ENCODE measurements at regions of chr5 and their contacts with region 1.

Region 1: DNA sequence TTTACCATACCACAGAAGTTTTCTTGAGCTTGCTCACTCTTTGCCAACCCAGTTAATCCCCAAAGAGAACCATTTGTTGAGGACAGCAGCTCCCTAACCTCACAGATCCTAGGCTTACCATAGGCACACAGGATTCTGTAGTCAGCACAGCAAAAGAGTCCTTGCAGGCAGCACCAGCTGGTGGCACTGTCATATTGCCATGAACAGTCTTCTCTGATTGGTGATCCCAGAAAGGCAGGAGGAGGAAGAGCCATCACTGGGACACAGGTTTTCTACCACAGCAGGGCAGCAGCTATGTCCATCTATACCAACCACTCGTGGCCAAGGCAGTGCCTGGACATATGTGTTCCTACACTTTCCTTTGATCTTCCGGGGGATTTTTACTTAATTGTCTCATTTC is 297.1 kb upstream of the CD180 start:
- DNase-seq: peak; percentile 53 to 79
- ATAC-seq: peak; percentile 75 to 84
- H3K4me3 ChIP-seq: peak overlapping the region in 1 of 4 donors; percentile 6
- H3K27ac ChIP-seq: peak overlapping the region; percentile 78 to 94 (median 89)
- H3K4me1 ChIP-seq: peaks cover 16 to 21% of the 10 kb centered on the region in 2 donors
- H3K27me3 ChIP-seq: no peaks in the 10 kb centered on the region
- CTCF ChIP-seq: peak in 3 of 5 experiments; percentile 28 to 39 (median 38)
- POLR2A ChIP-seq: no peak

Region 2: DNA sequence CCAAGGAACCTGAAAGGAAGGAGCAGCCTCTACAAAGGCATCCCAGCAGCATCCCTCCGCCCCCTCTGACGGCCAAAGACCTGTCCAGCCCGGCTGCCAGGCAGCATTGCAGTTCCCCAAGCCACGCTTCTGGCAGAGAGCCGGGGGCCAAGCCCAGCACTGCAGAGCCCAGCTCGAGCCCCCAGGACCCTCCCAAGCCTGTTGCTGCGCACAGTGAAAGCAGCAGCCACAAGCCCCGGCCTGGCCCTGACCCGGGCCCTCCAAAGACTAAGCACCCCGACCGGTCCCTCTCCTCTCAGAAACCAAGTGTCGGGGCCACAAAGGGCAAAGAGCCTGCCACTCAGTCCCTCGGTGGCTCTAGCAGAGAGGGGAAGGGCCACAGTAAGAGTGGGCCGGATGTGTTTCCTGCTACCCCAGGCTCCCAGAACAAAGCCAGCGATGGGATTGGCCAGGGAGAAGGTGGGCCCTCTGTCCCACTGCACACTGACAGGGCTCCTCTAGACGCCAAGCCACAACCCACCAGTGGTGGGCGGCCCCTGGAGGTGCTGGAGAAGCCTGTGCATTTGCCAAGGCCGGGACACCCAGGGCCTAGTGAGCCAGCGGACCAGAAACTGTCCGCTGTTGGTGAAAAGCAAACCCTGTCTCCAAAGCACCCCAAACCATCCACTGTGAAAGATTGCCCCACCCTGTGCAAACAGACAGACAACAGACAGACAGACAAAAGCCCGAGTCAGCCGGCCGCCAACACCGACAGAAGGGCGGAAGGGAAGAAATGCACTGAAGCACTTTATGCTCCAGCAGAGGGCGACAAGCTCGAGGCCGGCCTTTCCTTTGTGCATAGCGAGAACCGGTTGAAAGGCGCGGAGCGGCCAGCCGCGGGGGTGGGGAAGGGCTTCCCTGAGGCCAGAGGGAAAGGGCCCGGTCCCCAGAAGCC is 327.9 kb before region 1 on chr5:
- in situ Hi-C with region 1: no loop called
- intact Hi-C with region 1: no loop called
- DNase-seq: peak; percentile 44 to 72
- ATAC-seq: peak; percentile 63 to 79
- H3K4me3 ChIP-seq: peak overlapping the region; percentile 8 to 46 (median 18)
- H3K27ac ChIP-seq: peak overlapping the region; percentile 53 to 75 (median 57)
- H3K4me1 ChIP-seq: no peaks in the 10 kb centered on the region
- H3K27me3 ChIP-seq: no peaks in the 10 kb centered on the region
- CTCF ChIP-seq: peak; percentile 28 to 60 (median 56)
- POLR2A ChIP-seq: no peak

Region 3: GRCh38 chr5:67315082-67315989 is 178.3 kb before region 1 on chr5:
- in situ Hi-C with region 1: no loop called
- intact Hi-C with region 1: no loop called
- DNase-seq: no peak
- ATAC-seq: no peak
- H3K4me3 ChIP-seq: peak overlapping the region in 1 of 4 donors; percentile 25
- H3K27ac ChIP-seq: peak overlapping the region in 1 of 4 donors; percentile 31
- H3K4me1 ChIP-seq: no peaks in the 10 kb centered on the region
- H3K27me3 ChIP-seq: no peaks in the 10 kb centered on the region
- CTCF ChIP-seq: no peak
- POLR2A ChIP-seq: no peak

Region 4: GRCh38 chr5:67476531-67476930 is 17.1 kb before region 1 on chr5:
- in situ Hi-C with region 1: no loop called
- intact Hi-C with region 1: loop called (anchors 2 kb)
- DNase-seq: no peak
- ATAC-seq: no peak
- H3K4me3 ChIP-seq: no peak overlapping the region
- H3K27ac ChIP-seq: peak overlapping the region; percentile 87 to 95 (median 90)
- H3K4me1 ChIP-seq: peaks cover 4 to 11% of the 10 kb centered on the region in 2 donors
- H3K27me3 ChIP-seq: no peaks in the 10 kb centered on the region
- CTCF ChIP-seq: no peak
- POLR2A ChIP-seq: no peak

Region 5: GRCh38 chr5:67693956-67694809 is 200.5 kb after region 1 on chr5:
- in situ Hi-C with region 1: loop called in 1 of 4 experiments (anchors 25 kb)
- intact Hi-C with region 1: loop called (anchors 2 kb)
- DNase-seq: peak; percentile 94 to 98
- ATAC-seq: peak; percentile 95
- H3K4me3 ChIP-seq: peak overlapping the region in 1 of 4 donors; percentile 22
- H3K27ac ChIP-seq: peak overlapping the region; percentile 88 to 93 (median 90)
- H3K4me1 ChIP-seq: peaks cover 29 to 30% of the 10 kb centered on the region in 2 donors
- H3K27me3 ChIP-seq: no peaks in the 10 kb centered on the region
- CTCF ChIP-seq: peak in 1 of 5 experiments; percentile 18
- POLR2A ChIP-seq: peak; percentile 52 to 84

Region 6: DNA sequence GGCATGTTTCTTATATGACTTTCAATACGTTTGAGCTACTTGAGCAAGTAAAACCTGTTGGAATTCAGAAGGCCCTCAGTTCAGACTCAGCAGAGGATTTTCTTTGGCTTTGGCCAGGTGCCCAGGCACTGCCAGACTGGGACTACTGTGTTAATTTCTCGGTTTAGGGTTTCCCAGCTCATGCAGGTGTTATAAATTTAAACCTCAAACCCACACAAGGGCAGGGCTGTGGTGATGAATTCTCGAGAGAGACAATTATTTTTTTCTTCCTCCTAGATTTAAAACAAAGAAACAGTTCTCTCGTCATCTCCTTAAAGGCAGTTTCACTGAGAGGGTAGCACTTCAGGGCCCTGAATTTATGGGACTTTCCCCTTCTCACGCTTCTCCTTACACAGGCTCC is 315.9 kb after region 1 on chr5:
- in situ Hi-C with region 1: loop called in 1 of 4 experiments (anchors 25 kb)
- intact Hi-C with region 1: loop called (anchors 5 kb)
- DNase-seq: no peak
- ATAC-seq: no peak
- H3K4me3 ChIP-seq: no peak overlapping the region
- H3K27ac ChIP-seq: peak overlapping the region; percentile 91 to 95 (median 92)
- H3K4me1 ChIP-seq: peaks cover 39 to 44% of the 10 kb centered on the region in 2 donors
- H3K27me3 ChIP-seq: no peaks in the 10 kb centered on the region
- CTCF ChIP-seq: no peak
- POLR2A ChIP-seq: no peak

Region 7: DNA sequence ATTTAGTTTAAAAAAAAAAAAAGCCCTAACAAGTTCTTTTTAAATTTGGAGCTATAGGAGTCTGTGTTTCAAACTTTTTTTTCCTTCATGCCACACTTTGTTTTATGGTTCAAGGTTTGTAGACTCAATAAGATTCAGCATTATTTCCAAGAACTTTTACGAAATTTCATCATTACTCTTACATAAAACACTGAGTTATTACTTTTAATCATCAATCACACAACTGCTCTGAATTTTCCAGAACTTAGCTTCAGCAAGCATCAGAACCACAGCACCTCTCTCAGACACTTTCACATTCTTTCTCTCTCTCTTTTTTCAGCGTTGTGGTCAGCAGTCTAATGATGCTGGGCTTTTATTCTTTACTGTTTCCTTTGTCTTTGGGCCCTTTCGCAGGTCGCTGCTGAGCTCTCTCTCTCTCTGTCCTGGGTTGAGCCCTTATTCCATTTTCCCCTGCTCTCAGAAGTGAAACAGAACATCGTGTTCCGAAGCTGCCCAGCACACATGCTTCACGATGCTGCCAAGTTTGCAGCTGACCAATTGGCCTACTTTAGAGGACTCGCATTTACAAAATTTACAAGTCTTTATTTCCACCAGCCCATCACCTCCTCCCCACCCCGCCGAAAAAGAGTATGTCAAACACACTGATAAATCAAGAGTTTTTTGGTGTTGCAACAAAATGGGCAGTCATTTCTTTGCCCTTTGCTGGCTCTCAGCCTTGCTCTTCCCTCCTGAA is 677.3 kb after region 1 on chr5:
- in situ Hi-C with region 1: no loop called
- intact Hi-C with region 1: loop called (anchors 10 kb)
- DNase-seq: peak; percentile 82 to 93
- ATAC-seq: peak; percentile 99 to 100
- H3K4me3 ChIP-seq: peak overlapping the region; percentile 18 to 31 (median 26)
- H3K27ac ChIP-seq: peak overlapping the region; percentile 73 to 86 (median 85)
- H3K4me1 ChIP-seq: peaks cover 27 to 31% of the 10 kb centered on the region in 2 donors
- H3K27me3 ChIP-seq: no peaks in the 10 kb centered on the region
- CTCF ChIP-seq: no peak
- POLR2A ChIP-seq: peak in 1 of 2 donors; percentile 30

Region 8: DNA sequence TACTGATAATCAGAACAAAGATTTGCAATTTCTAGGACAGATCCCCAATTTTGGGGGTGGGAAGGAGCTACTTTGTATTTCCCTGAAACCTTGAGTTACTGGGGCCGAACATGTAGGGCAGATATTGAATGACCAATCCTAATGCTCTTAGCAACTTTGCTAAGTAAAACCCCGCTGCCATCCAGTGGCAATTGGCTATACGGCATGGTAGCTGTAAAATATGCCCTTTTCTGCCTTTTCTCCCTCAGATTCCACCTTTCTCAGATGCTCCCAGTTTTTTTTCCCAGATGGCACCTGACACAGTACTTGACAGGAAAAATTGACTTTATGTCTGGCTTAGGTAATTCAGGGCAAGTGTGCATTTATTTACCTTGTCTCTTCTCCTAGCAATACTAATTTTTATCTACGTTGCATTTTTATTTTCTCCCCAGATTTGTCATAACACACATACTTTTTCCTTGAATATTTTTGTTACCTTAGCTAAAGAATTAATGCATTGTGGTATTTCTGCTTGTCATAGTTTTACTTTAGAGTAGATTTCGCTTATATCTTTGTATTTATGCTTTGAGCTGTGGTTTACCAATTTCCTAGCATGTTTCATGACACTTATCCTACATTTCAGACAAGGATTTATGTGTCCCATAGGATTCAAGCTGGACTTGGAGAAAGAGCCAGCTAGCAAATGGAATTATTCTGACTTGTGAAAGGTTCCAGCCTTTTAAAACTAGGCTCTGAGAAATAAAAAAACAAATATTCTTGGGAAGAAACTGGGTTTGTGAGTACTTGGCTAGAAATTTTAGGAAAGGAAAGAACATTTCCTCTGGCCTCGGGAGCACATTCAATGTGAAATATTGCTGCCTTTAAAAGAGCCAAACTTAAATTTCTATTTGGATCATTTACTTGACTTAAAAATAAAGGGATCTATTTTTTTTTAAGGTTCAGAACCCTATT is 759.3 kb after region 1 on chr5:
- in situ Hi-C with region 1: loop called in 1 of 4 experiments (anchors 25 kb)
- intact Hi-C with region 1: loop called (anchors 1 kb)
- DNase-seq: peak; percentile 36 to 61
- ATAC-seq: peak; percentile 77 to 83
- H3K4me3 ChIP-seq: peak overlapping the region in 3 of 4 donors; percentile 6 to 28 (median 19)
- H3K27ac ChIP-seq: peak overlapping the region; percentile 67 to 75 (median 74)
- H3K4me1 ChIP-seq: peaks cover 80 to 88% of the 10 kb centered on the region in 2 donors
- H3K27me3 ChIP-seq: no peaks in the 10 kb centered on the region
- CTCF ChIP-seq: peak; percentile 56 to 86 (median 73)
- POLR2A ChIP-seq: no peak

Measured in gastrocnemius medialis (tissue), 4 donors.